ENCODE measurements at regions of chr6 and their contacts with region 1.

Region 1: DNA sequence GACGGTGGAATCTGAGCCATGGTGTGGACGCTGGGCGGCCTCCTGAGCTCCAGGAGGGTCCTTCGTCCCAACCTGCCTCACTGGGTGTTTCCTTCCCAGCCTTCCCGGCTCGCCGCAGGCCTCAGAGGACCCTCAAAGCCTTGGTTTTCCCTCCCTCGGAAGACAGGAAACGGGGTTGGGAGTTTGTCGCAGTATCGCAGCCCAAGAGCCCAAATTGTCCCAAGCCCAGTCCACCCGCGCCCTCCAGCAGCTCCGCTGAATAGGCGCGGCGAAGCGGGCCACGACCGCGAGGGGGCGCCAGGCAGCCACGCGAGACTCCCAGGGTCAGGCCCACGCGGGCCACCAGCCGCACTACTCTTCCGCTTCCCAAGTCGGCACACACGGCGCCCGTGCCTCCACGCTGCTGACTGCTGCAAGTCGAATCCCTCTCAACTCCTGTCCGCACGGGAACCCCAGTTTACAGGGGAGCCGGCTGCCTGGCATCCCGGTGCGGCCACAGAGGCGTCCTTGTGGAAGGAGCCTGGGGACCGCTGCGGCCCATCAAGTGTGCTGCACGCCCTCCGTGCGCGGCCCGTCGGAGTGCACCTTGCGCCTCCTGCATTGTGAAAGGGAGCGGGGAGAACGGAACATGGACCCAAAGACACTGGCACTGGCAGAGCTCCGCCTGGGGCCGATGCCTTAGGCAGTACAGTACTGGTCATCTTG is 40.4 kb upstream of the HMGA1 start:
- DNase-seq: peak; percentile 94
- ATAC-seq: peak; percentile 99
- H3K4me3 Mint-ChIP-seq: peak overlapping the region; percentile 91
- H3K27ac Mint-ChIP-seq: peak overlapping the region; percentile 83
- H3K4me1 Mint-ChIP-seq: peaks cover 8% of the 10 kb centered on the region
- H3K27me3 Mint-ChIP-seq: no peaks in the 10 kb centered on the region
- CTCF ChIP-seq: peak; percentile 78

Region 2: DNA sequence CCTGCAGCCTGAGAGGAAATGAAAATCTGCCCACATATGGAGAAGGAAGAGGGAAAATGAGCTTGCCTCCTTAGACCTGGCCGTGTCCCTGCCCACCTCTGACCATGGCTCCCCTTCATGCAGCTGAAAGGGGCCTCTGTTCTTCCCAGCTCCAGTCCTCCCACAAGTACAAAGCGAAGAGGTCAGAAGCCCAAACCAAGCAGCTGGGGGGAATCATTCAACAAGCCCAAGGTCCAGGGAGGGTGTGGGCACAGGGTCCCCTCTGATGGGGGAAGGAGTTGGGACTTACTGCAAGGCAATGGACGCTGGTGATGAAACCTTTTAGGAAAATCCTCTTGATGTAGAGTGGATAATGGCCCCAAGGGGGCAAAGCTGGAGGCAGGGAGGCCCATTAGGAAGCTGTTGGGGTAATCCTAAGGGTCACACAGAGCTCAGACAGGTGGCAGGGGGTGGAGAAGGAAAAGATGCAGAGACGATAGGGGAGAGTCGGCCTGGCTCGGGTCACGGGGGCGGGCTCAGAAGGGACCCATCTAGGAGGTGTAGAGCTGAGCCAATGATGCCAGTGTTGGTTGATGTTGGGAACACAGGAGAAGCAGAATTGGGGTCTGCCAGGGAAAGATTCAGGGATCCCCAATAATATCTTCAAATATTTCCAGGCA is 34.3 kb before region 1 on chr6:
- CTCF ChIA-PET with region 1: interaction called, 14 read pairs
- POLR2A ChIA-PET with region 1: interaction called, 22 read pairs
- intact Hi-C with region 1: loop called (anchors 1 kb)
- DNase-seq: peak; percentile 7
- ATAC-seq: no peak
- H3K4me3 Mint-ChIP-seq: no peak overlapping the region
- H3K27ac Mint-ChIP-seq: no peak overlapping the region
- H3K4me1 Mint-ChIP-seq: peaks cover 3% of the 10 kb centered on the region
- H3K27me3 Mint-ChIP-seq: no peaks in the 10 kb centered on the region
- CTCF ChIP-seq: no peak

Region 3: DNA sequence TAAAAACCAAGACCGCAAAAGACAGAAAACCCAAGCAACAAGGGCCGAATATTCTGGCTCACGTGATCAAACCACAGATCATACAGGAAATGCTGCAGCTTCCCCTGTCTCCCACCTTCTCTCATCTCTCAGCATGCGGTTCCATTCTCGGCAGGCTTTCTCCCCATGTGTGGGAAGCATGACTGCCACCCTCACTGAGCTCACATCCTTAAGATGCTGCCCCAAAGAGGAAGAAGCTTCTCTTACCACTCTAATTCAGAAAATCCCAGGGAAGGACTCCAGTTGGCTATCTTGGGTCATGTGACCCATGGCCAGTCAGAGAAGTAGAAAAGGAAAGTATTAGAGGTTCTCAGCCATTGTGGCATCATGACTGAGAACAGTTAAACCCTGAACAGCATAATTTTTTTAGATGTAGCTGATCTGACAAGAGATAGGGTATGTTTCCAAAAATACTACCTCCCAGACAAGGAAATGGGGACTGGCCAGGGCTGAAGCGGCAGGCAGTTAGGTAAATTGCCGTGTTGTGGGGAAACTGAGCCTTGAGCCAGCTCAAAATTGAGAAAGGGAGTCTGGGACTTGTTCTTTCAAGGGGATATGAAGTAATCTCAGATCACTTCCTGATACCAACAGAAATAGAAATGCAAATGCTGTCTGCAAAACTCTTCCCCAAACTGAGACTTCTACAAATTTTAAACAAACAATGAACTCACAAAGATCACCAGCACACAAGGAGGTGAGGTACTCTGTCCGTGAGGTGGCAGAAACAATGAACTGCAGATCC is 13.3 kb before region 1 on chr6:
- CTCF ChIA-PET with region 1: interaction called, 11 read pairs
- POLR2A ChIA-PET with region 1: interaction called, 7 read pairs
- intact Hi-C with region 1: no loop called
- DNase-seq: no peak
- ATAC-seq: peak; percentile 84
- H3K4me3 Mint-ChIP-seq: peak overlapping the region; percentile 79
- H3K27ac Mint-ChIP-seq: peak overlapping the region; percentile 95
- H3K4me1 Mint-ChIP-seq: peaks cover 23% of the 10 kb centered on the region
- H3K27me3 Mint-ChIP-seq: no peaks in the 10 kb centered on the region
- CTCF ChIP-seq: no peak

Region 4: DNA sequence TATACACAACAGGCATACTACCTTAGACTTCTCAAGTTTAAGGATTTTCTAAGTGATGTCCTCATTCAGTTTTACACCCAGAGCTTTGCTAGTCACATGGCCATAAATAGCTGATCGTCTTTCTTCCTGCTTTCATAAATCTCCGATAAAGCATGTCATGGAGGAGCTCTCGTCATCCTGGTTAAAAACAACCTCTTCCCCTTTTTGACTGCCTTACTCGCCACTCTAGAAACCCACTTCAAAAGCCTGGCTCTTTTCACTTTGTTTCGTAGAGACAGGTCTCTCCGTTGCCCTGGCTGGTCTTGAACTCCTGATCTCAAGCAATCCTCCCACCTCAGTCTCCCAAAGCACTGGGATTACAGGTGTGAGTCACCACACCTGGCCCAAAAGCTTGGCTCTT is 119.5 kb after region 1 on chr6:
- CTCF ChIA-PET with region 1: interaction called, 3 read pairs
- POLR2A ChIA-PET with region 1: no interaction called
- intact Hi-C with region 1: loop called (anchors 10 kb)
- DNase-seq: no peak
- ATAC-seq: peak; percentile 79
- H3K4me3 Mint-ChIP-seq: peak overlapping the region; percentile 77
- H3K27ac Mint-ChIP-seq: peak overlapping the region; percentile 94
- H3K4me1 Mint-ChIP-seq: peaks cover 69% of the 10 kb centered on the region
- H3K27me3 Mint-ChIP-seq: no peaks in the 10 kb centered on the region
- CTCF ChIP-seq: no peak

Region 5: GRCh38 chr6:34610819-34611477 is 414.7 kb after region 1 on chr6:
- CTCF ChIA-PET with region 1: interaction called, 16 read pairs
- POLR2A ChIA-PET with region 1: no interaction called
- intact Hi-C with region 1: loop called (anchors 1 kb)
- DNase-seq: no peak
- ATAC-seq: no peak
- H3K4me3 Mint-ChIP-seq: no peak overlapping the region
- H3K27ac Mint-ChIP-seq: no peak overlapping the region
- H3K4me1 Mint-ChIP-seq: peaks cover 9% of the 10 kb centered on the region
- H3K27me3 Mint-ChIP-seq: no peaks in the 10 kb centered on the region
- CTCF ChIP-seq: no peak